CD4-positive, alpha-beta T cell (primary cell): ENCODE measurements at regions of chr9 and their contacts with region 1.

Region 1: GRCh38 chr9:131334629-131335367 is 45.3 kb downstream of the PLPP7 start:
- DNase-seq: no peak
- ATAC-seq: no peak
- H3K4me3 ChIP-seq: no peak overlapping the region
- H3K4me3 Mint-ChIP-seq: no peak overlapping the region
- H3K27ac ChIP-seq: no peak overlapping the region
- H3K27ac Mint-ChIP-seq: no peak overlapping the region
- H3K4me1 ChIP-seq: peaks cover 7% of the 10 kb centered on the region
- H3K4me1 Mint-ChIP-seq: peaks cover 4% of the 10 kb centered on the region
- H3K27me3 ChIP-seq: no peaks in the 10 kb centered on the region
- H3K27me3 Mint-ChIP-seq: no peaks in the 10 kb centered on the region
- CTCF ChIP-seq: no peak

Region 2: DNA sequence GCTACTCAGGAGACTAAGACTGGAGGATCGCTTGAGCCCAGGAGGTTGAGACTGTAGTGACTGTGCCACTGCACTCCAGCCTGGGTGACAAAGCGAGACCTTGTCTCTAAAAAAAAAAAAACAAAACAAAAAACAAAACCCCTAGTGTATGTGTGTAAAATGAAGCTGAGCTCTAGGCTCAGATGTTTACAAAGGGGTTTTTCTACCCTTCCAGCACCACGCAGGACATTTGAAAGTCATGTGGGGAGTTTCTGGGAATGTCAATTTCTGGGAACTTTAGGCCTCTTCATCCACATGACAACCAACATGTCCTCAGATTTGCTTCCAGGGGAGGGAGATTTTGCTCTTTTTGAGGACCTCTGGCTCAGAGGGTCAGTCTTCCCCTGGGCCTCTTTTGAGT is 280.9 kb before region 1 on chr9:
- CTCF ChIA-PET with region 1: interaction called, 4 read pairs
- POLR2A ChIA-PET with region 1: no interaction called
- intact Hi-C with region 1: loop called (anchors 1 kb)
- DNase-seq: no peak
- ATAC-seq: no peak
- H3K4me3 ChIP-seq: no peak overlapping the region
- H3K4me3 Mint-ChIP-seq: no peak overlapping the region
- H3K27ac ChIP-seq: no peak overlapping the region
- H3K27ac Mint-ChIP-seq: no peak overlapping the region
- H3K4me1 ChIP-seq: peaks cover 2% of the 10 kb centered on the region
- H3K4me1 Mint-ChIP-seq: no peaks in the 10 kb centered on the region
- H3K27me3 ChIP-seq: no peaks in the 10 kb centered on the region
- H3K27me3 Mint-ChIP-seq: no peaks in the 10 kb centered on the region
- CTCF ChIP-seq: no peak

Region 3: GRCh38 chr9:131237931-131238401 is 96.8 kb before region 1 on chr9:
- CTCF ChIA-PET with region 1: interaction called, 5 read pairs
- POLR2A ChIA-PET with region 1: interaction called, 3 read pairs
- intact Hi-C with region 1: loop called in 1 of 2 experiments (anchors 10 kb)
- DNase-seq: peak; percentile 74 to 93 (median 82)
- ATAC-seq: peak; percentile 92
- H3K4me3 ChIP-seq: peak overlapping the region; percentile 43
- H3K4me3 Mint-ChIP-seq: peak overlapping the region; percentile 84
- H3K27ac ChIP-seq: peak overlapping the region; percentile 52 to 79
- H3K27ac Mint-ChIP-seq: peak overlapping the region; percentile 95
- H3K4me1 ChIP-seq: peaks cover 76% of the 10 kb centered on the region
- H3K4me1 Mint-ChIP-seq: peaks cover 52% of the 10 kb centered on the region
- H3K27me3 ChIP-seq: no peaks in the 10 kb centered on the region
- H3K27me3 Mint-ChIP-seq: no peaks in the 10 kb centered on the region
- CTCF ChIP-seq: no peak